ENCODE measurements at regions of chr7 and their contacts with region 1.

Region 1: GRCh38 chr7:107168233-107169119 is at the start of gene HBP1:
- DNase-seq: peak; percentile 98
- ATAC-seq: peak; percentile 82
- H3K4me3 Mint-ChIP-seq: peak within 1 kb of the TSS; percentile 91
- H3K27ac Mint-ChIP-seq: peak within 1 kb of the TSS; percentile 100
- H3K4me1 Mint-ChIP-seq: peaks cover 32% of the 10 kb centered on the region
- H3K27me3 Mint-ChIP-seq: no peaks in the 10 kb centered on the region
- total RNA-seq, gene HBP1: 17.8 to 25.4 TPM

Region 2: DNA sequence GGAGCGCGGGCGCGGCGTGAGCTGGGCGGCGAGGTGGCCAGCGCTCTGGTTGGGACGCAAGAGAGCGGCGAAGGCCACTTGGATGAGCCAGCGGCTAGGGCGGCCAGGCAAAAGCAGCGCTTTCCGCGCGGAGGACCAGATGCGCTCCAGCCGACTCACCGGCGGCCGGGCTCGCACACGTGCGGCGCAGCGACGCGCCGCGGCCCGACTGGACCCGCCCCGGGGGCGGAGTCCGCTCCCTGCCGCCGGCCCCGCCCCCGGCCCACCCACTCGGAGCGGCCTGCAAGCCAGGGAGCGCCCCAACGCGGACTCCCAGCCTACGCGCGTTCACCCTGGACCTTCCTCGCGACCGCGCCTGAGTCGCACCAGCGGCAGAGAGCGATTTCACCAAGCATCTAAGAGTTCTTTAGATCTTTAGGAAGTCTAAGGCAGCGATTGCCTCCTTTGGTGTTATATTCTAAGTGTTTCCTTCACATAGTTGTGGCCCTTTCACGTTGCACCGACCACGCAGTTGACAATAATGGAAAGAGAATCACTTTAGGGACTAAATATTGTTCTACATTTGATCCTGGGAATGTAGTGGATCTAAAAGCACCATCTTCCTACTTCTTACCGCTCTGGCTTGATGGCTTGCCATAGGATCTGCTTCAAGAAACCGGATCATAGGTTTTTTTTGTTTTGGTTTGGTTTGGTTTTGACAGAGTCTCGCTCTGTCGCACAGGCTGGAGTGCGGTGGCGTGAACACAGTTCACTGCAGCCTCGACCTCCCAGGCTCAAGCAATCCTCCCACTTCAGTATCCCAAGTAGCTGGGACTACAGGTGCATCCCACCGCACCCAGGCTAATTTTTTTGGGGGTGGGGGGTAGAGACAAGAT is 1646.2 kb before region 1 on chr7 and contains the start of gene PUS7:
- CTCF ChIA-PET with region 1: no interaction called
- POLR2A ChIA-PET with region 1: no interaction called
- intact Hi-C with region 1: loop called in 1 of 2 experiments (anchors 10 kb)
- DNase-seq: peak; percentile 91
- ATAC-seq: peak; percentile 89
- H3K4me3 Mint-ChIP-seq: peak within 1 kb of the TSS; percentile 92
- H3K27ac Mint-ChIP-seq: peak within 1 kb of the TSS; percentile 90
- H3K4me1 Mint-ChIP-seq: peaks cover 17% of the 10 kb centered on the region
- H3K27me3 Mint-ChIP-seq: no peaks in the 10 kb centered on the region
- total RNA-seq, gene PUS7: 31.9 to 33.8 TPM

Region 3: DNA sequence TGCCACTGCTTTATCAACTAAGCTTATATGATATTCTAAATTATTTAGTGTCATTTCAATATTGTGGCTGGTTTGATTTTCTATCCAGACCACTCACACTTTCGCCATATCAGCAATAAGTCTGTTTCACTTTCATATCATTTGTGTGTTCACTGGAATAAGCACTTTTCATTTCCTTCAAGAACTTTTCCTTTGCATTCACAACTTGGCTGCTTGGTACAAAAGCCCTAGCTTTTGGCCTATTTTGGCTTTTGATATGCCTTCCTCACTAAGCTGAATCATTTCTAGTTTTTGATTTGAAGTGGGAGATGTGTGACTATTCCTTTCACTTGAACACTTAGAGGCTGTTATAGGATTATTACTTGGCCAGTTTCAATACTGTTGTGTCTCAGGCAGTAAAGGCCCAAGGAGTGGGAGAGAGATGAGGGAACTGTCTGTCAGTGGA is 762.8 kb before region 1 on chr7:
- CTCF ChIA-PET with region 1: no interaction called
- POLR2A ChIA-PET with region 1: no interaction called
- intact Hi-C with region 1: loop called in 1 of 2 experiments (anchors 5 kb)
- DNase-seq: peak; percentile 39
- ATAC-seq: peak; percentile 98
- H3K4me3 Mint-ChIP-seq: peak overlapping the region; percentile 8
- H3K27ac Mint-ChIP-seq: peak overlapping the region; percentile 55
- H3K4me1 Mint-ChIP-seq: peaks cover 38% of the 10 kb centered on the region
- H3K27me3 Mint-ChIP-seq: peaks cover 35% of the 10 kb centered on the region

Region 4: GRCh38 chr7:106865130-106866041 is 303.1 kb before region 1 on chr7 and contains the start of gene PIK3CG:
- CTCF ChIA-PET with region 1: interaction called, 7 read pairs
- POLR2A ChIA-PET with region 1: interaction called, 3 read pairs
- intact Hi-C with region 1: loop called (anchors 1 to 5 kb)
- DNase-seq: no peak
- ATAC-seq: peak; percentile 79
- H3K4me3 Mint-ChIP-seq: peak within 1 kb of the TSS; percentile 83
- H3K27ac Mint-ChIP-seq: peak within 1 kb of the TSS; percentile 92
- H3K4me1 Mint-ChIP-seq: peaks cover 75% of the 10 kb centered on the region
- H3K27me3 Mint-ChIP-seq: no peaks in the 10 kb centered on the region
- total RNA-seq, gene PIK3CG: 9.9 to 14.3 TPM

Region 5: DNA sequence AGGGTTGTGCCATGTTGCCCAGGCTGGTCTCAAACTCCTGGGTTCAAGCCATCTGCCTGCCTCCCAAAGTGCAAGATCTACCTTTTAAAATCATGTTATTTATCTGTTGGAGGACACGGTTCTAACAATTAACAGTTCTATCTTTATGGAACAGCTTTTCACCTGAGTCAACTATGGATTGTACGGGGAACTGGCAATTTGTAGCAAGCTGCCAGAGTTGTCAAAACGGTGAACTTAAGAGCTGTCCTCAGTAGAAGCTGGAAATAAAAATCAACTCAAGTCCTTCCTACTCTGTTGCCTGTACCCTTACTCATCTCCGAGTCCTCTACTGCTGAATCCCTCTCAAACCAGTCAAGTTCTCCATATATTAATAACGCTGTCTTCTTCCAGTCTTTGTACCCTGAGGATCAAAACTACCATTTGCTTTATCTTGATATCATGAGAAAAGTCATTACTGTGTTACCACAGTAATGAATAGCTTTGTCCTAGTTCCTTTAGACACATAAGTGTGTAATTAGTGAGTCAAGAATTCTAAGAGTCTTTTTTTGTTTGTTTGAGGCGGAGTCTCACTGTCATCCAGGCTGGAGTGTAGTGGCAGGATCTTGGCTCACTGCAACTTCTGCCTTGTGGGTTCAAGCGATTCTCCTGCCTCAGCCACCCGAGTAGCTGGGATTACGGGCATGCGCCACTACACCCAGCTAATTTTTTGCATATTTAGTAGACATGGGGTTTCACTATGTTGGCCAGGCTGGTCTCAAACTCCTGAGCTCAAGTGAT is 28.5 kb after region 1 on chr7:
- CTCF ChIA-PET with region 1: no interaction called
- POLR2A ChIA-PET with region 1: no interaction called
- intact Hi-C with region 1: no loop called
- DNase-seq: no peak
- ATAC-seq: no peak
- H3K4me3 Mint-ChIP-seq: no peak overlapping the region
- H3K27ac Mint-ChIP-seq: peak overlapping the region; percentile 20
- H3K4me1 Mint-ChIP-seq: peaks cover 4% of the 10 kb centered on the region
- H3K27me3 Mint-ChIP-seq: no peaks in the 10 kb centered on the region

Region 6: DNA sequence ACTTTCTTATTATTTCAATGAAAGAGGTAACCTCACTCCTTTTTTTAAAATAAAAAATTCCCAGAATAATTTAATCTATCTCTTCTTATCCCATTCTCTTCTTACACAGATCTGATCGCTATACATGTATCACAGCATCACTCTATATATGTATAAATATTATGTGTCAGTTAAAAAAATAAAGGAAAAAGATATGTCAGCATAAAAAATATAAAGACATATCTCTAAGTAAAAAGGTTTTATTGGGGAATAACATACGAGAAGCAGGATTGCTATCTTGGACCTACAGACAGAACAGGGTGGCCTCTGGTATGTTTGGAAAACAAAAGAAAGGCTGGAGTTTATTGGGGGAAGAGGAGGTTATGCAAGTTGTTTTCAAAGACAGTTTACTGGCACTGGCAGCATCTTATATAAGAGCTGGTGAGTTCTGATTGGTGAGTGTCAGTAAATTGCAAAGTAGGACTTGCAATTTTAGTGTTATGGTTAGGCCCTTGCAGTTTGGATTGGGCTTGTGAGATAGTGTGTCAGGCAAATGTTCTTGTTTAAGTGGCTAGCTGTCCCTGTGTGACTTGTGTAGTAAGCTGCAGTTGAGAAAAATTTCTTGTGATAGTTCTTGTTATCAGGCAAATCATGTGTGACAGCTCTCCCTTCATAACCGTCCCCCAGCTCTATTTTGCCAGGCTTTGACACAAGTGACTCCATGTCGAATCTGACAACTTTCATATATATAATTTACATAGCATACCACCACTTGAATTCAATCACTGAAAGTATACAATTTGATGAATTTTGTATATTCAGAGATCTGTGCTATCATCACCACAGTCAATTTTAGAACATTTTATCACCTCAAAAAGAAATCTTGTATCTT is 118.5 kb after region 1 on chr7:
- CTCF ChIA-PET with region 1: no interaction called
- POLR2A ChIA-PET with region 1: no interaction called
- intact Hi-C with region 1: no loop called
- DNase-seq: no peak
- ATAC-seq: no peak
- H3K4me3 Mint-ChIP-seq: no peak overlapping the region
- H3K27ac Mint-ChIP-seq: no peak overlapping the region
- H3K4me1 Mint-ChIP-seq: no peaks in the 10 kb centered on the region
- H3K27me3 Mint-ChIP-seq: no peaks in the 10 kb centered on the region

Region 7: GRCh38 chr7:107579885-107580715 is 411.6 kb after region 1 on chr7 and contains the start of gene BCAP29:
- CTCF ChIA-PET with region 1: no interaction called
- POLR2A ChIA-PET with region 1: no interaction called
- intact Hi-C with region 1: loop called in 1 of 2 experiments (anchors 1 kb)
- DNase-seq: peak; percentile 83
- ATAC-seq: peak; percentile 96
- H3K4me3 Mint-ChIP-seq: peak within 1 kb of the TSS; percentile 84
- H3K27ac Mint-ChIP-seq: peak within 1 kb of the TSS; percentile 88
- H3K4me1 Mint-ChIP-seq: peaks cover 18% of the 10 kb centered on the region
- H3K27me3 Mint-ChIP-seq: no peaks in the 10 kb centered on the region
- total RNA-seq, gene BCAP29: 31.4 to 38.8 TPM

Region 8: DNA sequence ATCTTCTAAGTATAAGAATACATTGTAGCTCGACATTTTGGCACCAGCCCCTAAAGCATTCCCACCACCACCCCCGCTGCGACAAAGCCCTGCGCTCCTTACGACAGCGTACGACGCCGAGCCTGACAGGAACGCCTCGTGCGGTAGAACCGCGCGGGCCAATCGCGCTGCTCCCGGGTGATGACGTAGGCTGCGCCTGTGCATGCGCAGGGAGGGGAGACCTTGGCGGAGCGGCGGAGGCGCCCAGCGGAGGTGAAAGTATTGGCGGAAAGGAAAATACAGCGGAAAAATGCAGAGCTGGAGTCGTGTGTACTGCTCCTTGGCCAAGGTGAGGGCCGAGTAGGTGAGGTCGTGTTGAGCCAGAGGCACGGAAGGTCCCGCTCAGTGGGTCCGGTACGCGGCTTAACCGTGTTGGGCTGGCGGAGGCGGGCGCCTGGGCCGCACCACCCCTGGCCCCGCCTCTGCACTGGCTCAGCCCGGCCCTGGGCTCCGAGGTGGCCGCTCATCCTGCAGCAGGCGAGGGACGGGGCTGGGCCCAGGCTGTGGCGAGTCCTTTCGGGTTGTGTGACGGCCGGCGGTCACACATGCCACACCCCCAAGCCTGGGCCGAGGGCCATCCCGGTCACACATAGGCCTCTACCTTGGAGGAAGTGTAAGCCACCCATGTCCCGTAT is 722.6 kb after region 1 on chr7 and contains the start of gene DLD:
- CTCF ChIA-PET with region 1: interaction called, 3 read pairs
- POLR2A ChIA-PET with region 1: no interaction called
- intact Hi-C with region 1: loop called in 1 of 2 experiments (anchors 1 kb)
- DNase-seq: peak; percentile 97
- ATAC-seq: peak; percentile 98
- H3K4me3 Mint-ChIP-seq: peak within 1 kb of the TSS; percentile 79
- H3K27ac Mint-ChIP-seq: peak within 1 kb of the TSS; percentile 92
- H3K4me1 Mint-ChIP-seq: peaks cover 40% of the 10 kb centered on the region
- H3K27me3 Mint-ChIP-seq: no peaks in the 10 kb centered on the region
- total RNA-seq, gene DLD: 71.4 to 101 TPM

Measured in activated CD4-positive, alpha-beta T cell treated with anti-CD3 and anti-CD28 coated beads for 36 hours (primary cell).